ENCODE measurements at regions of chr5 and their contacts with region 1.

Region 1: GRCh38 chr5:154520861-154521453 is 42.9 kb upstream of the HAND1 start:
- DNase-seq: peak; percentile 14 to 48 (median 40)
- H3K4me3 ChIP-seq: peak overlapping the region in 1 of 7 experiments; percentile 32
- H3K27ac ChIP-seq: no peak overlapping the region
- H3K4me1 ChIP-seq: no peaks in the 10 kb centered on the region
- H3K27me3 ChIP-seq: peaks cover 0 to 22% (median 10%) of the 10 kb centered on the region in 5 experiments

Region 2: GRCh38 chr5:154478224-154478565 is 42.8 kb before region 1 on chr5 and contains the start of gene HAND1:
- CTCF ChIA-PET with region 1: no interaction called
- POLR2A ChIA-PET with region 1: no interaction called
- DNase-seq: no peak
- H3K4me3 ChIP-seq: peak within 1 kb of the TSS in 4 of 7 experiments; percentile 15 to 65 (median 50)
- H3K27ac ChIP-seq: no peak within 1 kb of the TSS
- H3K4me1 ChIP-seq: peaks cover 0 to 55% (median 28%) of the 10 kb centered on the region in 4 experiments
- H3K27me3 ChIP-seq: peaks cover 23 to 100% (median 81%) of the 10 kb centered on the region in 5 experiments

Region 3: DNA sequence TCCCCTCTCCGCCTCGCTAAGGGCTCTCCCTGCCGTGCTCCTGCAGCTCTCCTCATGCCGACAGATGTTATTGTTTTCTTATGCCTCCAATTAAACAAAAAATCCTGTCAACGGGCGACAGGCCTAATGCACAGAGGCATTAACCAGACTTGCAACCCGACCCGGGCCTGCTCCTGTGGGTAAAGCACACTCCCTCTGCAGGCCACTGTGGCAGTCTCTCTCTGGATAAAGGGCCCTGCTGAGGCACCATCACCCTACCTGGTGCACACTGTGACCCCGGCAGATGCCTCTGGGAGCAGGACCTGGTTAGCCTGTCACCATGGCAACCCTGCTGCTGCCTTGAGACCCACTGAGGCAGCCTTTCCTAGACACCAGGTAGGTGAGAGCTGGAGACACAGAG is 15.3 kb before region 1 on chr5:
- CTCF ChIA-PET with region 1: interaction called, 23 read pairs
- POLR2A ChIA-PET with region 1: interaction called, 4 read pairs
- DNase-seq: no peak
- H3K4me3 ChIP-seq: no peak overlapping the region
- H3K27ac ChIP-seq: no peak overlapping the region
- H3K4me1 ChIP-seq: no peaks in the 10 kb centered on the region
- H3K27me3 ChIP-seq: peaks cover 0 to 5% (median 0%) of the 10 kb centered on the region in 5 experiments

Measured in common myeloid progenitor, CD34-positive (primary cell).